HEK293 (cell line): ENCODE measurements at regions of chr11 and their contacts with region 1.

Region 1: DNA sequence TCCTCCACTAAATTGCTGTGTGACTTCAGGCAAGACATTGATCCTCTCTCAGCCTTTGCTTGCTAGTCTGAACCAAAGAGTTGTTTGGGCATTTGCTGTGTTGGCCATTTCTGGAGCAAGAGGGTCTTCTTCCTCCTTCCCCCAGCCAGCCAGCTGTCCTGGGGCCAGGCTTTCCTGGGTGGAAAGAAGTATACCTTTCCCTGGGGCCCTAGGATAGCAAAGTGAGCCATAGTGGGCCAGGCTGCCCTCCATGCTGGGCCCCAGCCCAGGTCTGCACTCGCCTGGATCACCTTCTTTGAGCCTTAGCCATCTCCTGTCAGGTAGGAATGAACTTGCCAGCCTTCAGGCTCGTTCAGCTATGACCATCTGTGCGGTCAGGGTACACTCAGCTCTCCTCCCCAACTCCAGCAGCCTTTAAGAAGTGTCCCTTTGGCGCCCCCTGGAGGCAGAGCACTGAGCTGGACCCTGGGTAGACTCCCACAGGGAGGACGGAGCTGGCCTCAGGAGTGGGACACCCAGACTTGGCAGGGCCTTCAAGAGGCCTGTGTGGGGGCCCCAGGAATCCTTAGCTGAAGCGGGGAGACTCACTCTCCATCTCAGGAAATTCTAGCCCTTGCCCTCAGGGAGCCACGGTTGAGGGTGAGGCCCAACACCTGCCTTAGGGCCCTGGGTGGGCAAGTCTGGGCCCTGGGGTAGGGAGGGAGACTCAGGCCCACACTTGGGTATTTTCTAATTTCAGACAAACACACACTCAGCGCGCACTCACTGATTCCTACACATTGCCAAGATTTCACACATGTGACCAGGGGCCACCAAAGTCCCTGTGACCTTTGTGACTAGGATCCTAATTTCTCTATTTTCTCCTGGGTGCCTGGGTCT is 35.6 kb upstream of the TPBGL start:
- H3K4me3 ChIP-seq: no peak overlapping the region
- H3K27ac ChIP-seq: no peak overlapping the region
- H3K4me1 ChIP-seq: no peaks in the 10 kb centered on the region
- CTCF ChIP-seq: no peak

Region 2: GRCh38 chr11:75182669-75183068 is 22.3 kb before region 1 on chr11:
- CTCF ChIA-PET with region 1: interaction called, 24 read pairs
- POLR2A ChIA-PET with region 1: no interaction called
- H3K4me3 ChIP-seq: no peak overlapping the region
- H3K27ac ChIP-seq: no peak overlapping the region
- H3K4me1 ChIP-seq: no peaks in the 10 kb centered on the region
- CTCF ChIP-seq: no peak